Pancreas (tissue), 10 donors: ENCODE measurements at regions of chr1 and their contacts with region 1.

Region 1: DNA sequence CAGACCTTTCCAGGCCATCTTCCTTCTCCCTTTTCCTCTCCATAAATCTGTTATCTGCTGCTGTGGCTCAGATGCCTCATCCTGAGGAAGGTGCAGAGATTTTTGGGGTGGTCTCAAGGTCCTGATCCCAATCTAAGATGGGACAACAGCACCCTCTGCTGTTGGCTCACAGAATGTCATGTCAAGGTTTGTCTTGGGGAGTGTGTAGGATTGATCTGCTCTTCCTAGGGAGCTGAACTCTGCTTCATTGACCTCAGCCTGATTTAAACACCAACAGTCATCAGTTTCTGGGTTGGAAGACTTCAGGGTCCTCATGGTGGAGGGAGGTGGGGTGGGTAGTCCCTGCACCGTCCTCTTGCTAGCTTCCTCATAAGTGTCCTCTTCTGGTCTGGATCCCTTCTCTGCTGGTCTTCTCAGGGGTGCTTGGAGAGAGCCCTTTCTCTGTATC is 62.8 kb upstream of the LAX1 start:
- DNase-seq: peak in 4 of 6 donors; percentile 18 to 65 (median 52)
- ATAC-seq: peak in 3 of 4 donors; percentile 76 to 87 (median 81)
- H3K4me3 ChIP-seq: no peak overlapping the region
- H3K27ac ChIP-seq: no peak overlapping the region
- H3K4me1 ChIP-seq: no peaks in the 10 kb centered on the region
- H3K27me3 ChIP-seq: no peaks in the 10 kb centered on the region
- CTCF ChIP-seq: peak; percentile 59 to 70 (median 62)

Region 2: DNA sequence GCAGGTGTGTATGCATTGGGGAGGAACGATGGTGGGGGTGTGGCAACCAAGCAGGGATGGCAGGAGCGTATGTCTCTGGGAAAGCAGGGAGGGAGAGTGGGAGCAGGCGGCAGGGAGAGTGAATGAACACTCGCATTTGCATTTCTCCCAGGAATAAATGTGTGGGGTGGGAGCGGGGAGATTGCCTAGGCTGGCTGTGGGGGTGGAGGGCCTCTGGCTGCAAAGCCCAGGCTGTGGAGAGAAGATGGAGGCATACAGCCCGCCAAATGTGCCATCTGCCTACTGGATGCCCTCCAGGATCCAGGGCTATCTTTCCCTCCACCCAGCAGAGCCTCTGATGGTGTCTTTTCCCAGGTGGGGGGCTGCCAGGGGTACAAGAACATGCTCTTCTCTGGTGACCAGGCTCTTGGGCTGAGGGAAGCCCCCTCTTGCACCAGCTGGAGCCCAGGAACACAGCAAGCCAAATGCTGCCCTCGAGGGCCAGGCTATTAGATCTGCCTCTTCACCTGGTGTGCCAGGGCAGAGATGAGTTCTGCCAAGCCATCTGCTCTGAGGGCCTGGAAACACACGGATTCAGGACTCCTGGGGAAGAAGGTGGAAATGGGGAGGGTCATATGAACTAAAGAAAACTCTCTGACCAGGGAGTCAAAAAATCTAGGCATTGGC is 209.9 kb before region 1 on chr1:
- intact Hi-C with region 1: loop called in 1 of 3 experiments (anchors 10 kb)
- DNase-seq: no peak
- ATAC-seq: no peak
- H3K4me3 ChIP-seq: no peak overlapping the region
- H3K27ac ChIP-seq: no peak overlapping the region
- H3K4me1 ChIP-seq: peaks cover 0 to 6% (median 5%) of the 10 kb centered on the region in 3 donors
- H3K27me3 ChIP-seq: no peaks in the 10 kb centered on the region
- CTCF ChIP-seq: no peak

Region 3: DNA sequence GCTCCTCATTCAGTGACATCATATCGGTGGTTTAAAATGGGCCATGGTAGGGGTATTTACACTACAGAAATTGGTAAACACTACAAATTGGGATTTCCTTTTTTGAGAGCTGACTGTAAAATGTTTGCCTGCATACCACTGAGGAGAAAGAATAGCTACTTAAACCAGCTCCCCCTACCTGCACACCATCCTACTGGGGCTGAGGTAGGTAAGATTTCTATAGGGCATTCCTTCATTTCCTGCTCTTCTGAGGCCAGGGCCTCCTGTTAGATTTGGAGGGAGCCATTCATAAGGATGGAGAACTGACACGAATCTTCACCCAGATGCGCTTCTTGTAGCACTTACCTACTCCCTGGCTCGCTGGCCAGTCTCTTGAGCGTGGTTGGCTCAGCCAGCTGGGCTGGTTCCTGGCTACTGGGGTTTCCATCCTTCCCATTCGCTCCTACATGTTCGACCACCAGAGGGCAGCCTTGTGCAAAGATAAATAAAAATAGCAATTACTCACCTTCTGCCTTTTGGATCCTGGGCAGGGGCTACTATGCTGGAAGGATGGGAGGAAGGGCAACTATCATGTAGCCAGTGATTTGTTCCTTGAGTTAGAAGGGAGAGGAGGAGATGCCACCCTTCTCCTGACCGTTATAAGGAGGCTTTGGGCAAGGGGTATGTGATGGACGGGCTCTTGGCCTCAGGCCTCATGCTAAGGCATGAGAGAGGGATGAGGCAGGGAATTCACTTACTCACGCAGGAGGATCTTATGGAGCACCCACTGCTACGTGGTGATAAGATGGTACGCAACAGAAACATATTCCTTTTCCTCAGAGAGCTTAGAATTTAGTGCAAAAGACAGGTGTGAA is 197.5 kb before region 1 on chr1:
- intact Hi-C with region 1: loop called (anchors 5 to 10 kb)
- DNase-seq: peak; percentile 72 to 90 (median 88)
- ATAC-seq: peak; percentile 86 to 97 (median 92)
- H3K4me3 ChIP-seq: no peak overlapping the region
- H3K27ac ChIP-seq: no peak overlapping the region
- H3K4me1 ChIP-seq: no peaks in the 10 kb centered on the region
- H3K27me3 ChIP-seq: no peaks in the 10 kb centered on the region
- CTCF ChIP-seq: peak; percentile 59 to 85 (median 71)